Heart left ventricle (tissue), 16 donors: ENCODE measurements at regions of chr20 and their contacts with region 1.

Region 1: DNA sequence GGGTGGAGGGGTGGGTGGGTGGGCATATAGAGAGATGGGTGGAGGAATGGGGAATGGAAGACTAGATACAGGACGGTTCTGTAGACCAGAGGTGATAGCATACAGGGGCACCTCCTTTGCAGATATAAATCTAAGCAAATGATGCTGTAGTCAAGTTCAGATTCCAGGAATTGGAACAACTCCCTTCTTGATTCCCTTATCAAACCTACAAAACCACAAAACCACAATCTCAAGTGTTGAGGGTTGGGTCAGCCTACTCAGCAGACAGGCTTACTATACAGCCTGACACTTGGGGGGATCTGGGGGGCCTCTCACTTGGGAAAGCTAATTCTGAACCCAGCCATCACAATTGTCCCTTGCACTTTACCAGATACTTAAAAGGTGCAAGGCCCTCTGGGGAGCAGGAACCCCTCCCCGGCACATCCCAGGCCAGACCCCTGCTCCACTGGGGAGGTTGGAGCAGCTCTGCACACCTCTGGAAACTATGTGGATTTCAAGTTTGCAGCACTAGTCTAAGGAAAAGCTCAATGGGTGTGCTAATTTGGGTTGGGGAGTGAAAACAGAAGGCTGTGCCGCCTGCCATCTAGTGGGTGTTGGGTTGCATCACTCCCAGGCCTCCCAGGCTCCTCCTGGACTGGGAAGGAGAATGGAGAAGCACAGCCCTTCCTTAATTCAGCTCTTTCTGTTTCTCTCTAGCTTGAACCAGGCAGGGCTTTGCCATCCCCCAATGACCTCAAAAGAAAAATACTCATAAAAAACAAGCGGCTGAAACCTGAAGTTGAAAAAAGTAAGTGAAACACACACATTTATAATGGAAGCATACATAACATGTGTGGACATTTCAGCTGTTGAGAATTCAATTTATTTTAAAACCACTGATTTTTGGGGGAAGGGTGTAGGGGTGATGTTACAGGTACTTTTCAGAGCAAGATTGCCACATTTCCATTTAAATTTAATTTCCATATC is 121.2 kb upstream of the LAMP5 start:
- DNase-seq: peak; percentile 63 to 77 (median 71)
- ATAC-seq: peak; percentile 86 to 94 (median 91)
- H3K4me3 ChIP-seq: no peak overlapping the region
- H3K27ac ChIP-seq: no peak overlapping the region
- H3K4me1 ChIP-seq: peaks cover 0 to 16% (median 4%) of the 10 kb centered on the region in 12 donors
- H3K27me3 ChIP-seq: no peaks in the 10 kb centered on the region
- CTCF ChIP-seq: peak; percentile 56 to 84 (median 73)
- POLR2A ChIP-seq: no peak

Region 2: GRCh38 chr20:8756410-8756809 is 636.8 kb before region 1 on chr20:
- intact Hi-C with region 1: loop called in 3 of 10 experiments (anchors 5 to 10 kb)
- DNase-seq: peak in 1 of 5 donors; percentile 50
- ATAC-seq: peak in 2 of 4 donors; percentile 86 to 90
- H3K4me3 ChIP-seq: no peak overlapping the region
- H3K27ac ChIP-seq: no peak overlapping the region
- H3K4me1 ChIP-seq: peaks cover 0 to 16% (median 0%) of the 10 kb centered on the region in 12 donors
- H3K27me3 ChIP-seq: no peaks in the 10 kb centered on the region
- CTCF ChIP-seq: no peak
- POLR2A ChIP-seq: no peak

Region 3: DNA sequence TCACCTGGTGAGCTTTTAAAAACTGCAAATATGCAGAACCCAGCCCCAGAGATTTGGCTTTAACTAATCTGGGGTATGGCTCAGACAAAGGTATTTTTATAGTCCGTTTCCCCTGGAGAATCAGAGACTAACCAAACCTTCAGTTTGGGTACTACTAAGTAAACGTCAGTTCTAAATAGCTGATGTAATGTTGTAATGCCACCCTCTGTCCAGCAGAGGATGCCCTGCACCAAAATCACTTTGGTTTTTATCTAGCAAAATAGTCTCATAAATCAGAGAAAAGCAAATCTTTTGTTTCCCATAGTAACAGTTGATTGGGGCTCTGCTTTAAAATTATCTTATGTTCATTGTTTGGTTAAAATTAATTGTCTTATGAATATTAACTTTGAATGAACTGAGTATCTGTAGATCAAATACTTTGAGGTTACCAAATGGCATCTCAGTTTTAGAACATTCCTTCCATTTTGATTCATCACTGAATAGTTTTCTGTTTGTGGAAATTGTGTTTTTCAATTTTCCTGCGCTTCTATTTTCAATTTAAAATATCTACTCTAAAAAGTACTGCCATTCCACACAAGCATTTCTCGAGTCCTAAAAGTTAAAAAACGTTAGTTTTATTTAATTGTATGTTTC is 602.6 kb before region 1 on chr20:
- intact Hi-C with region 1: loop called in 4 of 10 experiments (anchors 1 to 10 kb)
- DNase-seq: peak in 3 of 5 donors; percentile 19 to 38 (median 37)
- ATAC-seq: peak in 1 of 4 donors; percentile 50
- H3K4me3 ChIP-seq: no peak overlapping the region
- H3K27ac ChIP-seq: no peak overlapping the region
- H3K4me1 ChIP-seq: peaks cover 0 to 8% (median 0%) of the 10 kb centered on the region in 12 donors
- H3K27me3 ChIP-seq: no peaks in the 10 kb centered on the region
- CTCF ChIP-seq: peak; percentile 86 to 100 (median 94)
- POLR2A ChIP-seq: no peak

Region 4: DNA sequence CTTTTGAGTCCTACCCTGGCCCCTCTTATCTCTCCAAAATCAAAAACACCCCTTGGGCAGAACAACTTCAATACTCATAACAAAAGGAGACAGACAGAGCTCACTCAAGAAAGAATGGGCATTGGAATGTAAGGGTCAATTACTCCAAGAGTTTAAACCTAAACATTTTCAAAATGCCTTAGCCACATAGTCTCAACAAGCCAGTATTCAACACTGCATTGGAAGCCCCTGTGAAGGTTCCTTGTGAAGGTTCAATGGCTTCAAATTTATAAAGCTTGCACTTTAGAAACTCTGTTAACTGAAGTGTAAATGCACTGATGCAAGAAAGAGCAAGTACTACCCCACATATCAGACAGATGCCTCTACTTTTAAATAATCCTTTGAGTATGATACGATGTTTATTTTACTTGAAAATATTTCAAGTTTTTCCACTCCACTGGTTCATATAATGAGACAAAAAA is 17.9 kb before region 1 on chr20:
- intact Hi-C with region 1: no loop called
- DNase-seq: no peak
- ATAC-seq: no peak
- H3K4me3 ChIP-seq: no peak overlapping the region
- H3K27ac ChIP-seq: peak overlapping the region in 1 of 12 donors; percentile 0
- H3K4me1 ChIP-seq: peaks cover 0 to 30% (median 2%) of the 10 kb centered on the region in 12 donors
- H3K27me3 ChIP-seq: no peaks in the 10 kb centered on the region
- CTCF ChIP-seq: no peak
- POLR2A ChIP-seq: no peak

Region 5: DNA sequence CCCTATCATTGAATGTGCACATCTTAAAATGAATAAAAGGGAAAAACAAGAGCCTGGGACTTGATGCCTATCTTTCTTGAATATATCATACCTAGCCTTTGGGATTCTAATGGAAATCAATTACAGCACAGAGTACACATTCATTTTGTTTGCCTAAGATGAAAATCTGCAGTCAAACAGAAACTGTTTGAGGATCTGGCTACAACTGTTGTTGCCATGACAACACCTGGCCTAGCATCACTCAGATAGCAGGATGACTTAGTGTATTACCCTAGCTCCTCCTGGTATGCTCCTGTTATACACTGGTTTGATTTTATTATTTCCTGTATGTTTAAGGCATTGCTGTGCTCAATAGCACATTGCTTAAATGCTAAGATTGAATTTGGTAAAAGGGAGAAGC is 49.7 kb after region 1 on chr20:
- intact Hi-C with region 1: loop called in 1 of 10 experiments (anchors 10 kb)
- DNase-seq: no peak
- ATAC-seq: no peak
- H3K4me3 ChIP-seq: no peak overlapping the region
- H3K27ac ChIP-seq: no peak overlapping the region
- H3K4me1 ChIP-seq: no peaks in the 10 kb centered on the region
- H3K27me3 ChIP-seq: no peaks in the 10 kb centered on the region
- CTCF ChIP-seq: no peak
- POLR2A ChIP-seq: no peak

Region 6: DNA sequence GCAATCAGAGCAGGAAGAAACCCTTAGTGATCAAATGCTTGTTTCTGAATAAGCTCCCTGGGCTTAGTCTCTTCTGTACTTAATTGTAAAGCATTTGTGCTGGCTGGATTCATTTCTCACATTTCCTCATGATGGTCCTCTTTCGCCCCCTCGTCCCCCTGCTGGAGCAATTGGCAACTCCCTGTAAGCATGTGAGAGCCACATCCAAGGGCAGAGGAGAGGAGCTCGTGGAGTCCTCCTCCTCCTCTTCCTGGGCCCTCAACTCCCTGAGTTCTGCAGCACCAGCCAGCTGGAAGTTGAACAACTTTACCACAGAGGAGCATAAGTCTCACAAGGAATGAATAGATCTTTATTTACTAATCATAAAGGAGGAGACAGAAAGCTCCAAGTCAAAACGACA is 654.3 kb after region 1 on chr20:
- intact Hi-C with region 1: no loop called
- DNase-seq: no peak
- ATAC-seq: no peak
- H3K4me3 ChIP-seq: no peak overlapping the region
- H3K27ac ChIP-seq: no peak overlapping the region
- H3K4me1 ChIP-seq: peaks cover 0 to under 1% (median 0%) of the 10 kb centered on the region in 12 donors
- H3K27me3 ChIP-seq: no peaks in the 10 kb centered on the region
- CTCF ChIP-seq: no peak
- POLR2A ChIP-seq: no peak